Head of caudate nucleus (tissue), 42 donors: ENCODE measurements at regions of chr22 and their contacts with region 1.

Region 1: DNA sequence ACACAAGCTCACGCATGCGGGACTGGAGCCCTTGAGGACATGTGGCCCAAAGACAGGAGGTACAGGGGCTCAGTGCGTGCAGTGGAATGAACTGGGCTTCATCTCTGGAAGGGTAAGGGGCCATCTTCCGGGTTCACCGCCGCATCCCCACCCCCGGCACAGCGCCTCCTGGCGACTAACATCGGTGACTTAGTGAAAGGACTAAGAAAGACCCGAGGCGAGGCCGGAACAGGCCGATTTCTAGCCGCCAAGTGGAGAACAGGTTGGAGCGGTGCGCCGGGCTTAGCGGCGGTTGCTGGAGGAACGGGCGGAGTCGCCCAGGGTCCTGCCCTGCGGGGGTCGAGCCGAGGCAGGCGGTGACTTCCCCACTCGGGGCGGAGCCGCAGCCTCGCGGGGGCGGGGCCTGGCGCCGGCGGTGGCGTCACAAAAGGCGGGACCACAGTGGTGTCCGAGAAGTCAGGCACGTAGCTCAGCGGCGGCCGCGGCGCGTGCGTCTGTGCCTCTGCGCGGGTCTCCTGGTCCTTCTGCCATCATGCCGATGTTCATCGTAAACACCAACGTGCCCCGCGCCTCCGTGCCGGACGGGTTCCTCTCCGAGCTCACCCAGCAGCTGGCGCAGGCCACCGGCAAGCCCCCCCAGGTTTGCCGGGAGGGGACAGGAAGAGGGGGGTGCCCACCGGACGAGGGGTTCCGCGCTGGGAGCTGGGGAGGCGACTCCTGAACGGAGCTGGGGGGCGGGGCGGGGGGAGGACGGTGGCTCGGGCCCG is at the start of gene MIF:
- DNase-seq: peak; percentile 92 to 98 (median 97)

Region 2: GRCh38 chr22:23857606-23858483 is 36.3 kb before region 1 on chr22 and contains the start of gene SLC2A11:
- intact Hi-C with region 1: loop called (anchors 5 kb)
- DNase-seq: peak; percentile 91 to 98 (median 96)